ENCODE measurements at regions of chr2 and their contacts with region 1.

Region 1: DNA sequence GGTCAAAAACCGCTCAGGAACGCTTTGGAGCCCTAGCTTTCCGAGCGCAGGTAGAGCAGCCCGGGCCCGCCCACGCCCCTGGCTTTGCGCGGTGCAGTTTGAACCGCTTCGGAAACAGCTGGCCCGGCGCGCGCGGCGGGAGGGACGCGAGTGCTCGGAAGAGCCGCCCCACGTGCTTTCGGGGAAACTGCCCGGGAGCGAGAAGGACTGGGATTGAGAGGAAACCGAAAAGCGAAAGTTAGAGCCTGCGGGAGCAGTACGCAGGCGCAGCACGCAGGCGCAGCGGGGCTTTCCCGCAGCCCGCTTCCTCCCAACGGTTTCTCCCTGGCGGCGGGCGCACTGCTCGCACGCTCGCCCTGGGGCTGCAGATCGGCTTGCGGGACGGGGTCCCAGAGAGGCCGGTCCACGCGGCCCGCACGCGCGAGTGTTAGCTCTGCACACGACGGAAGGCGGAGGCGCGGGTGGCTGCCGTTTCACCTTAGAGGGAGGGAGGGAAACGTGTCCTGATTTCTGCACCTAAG is 6.3 kb upstream of the STAT1 start:
- DNase-seq: peak; percentile 96
- ATAC-seq: peak; percentile 100

Region 2: DNA sequence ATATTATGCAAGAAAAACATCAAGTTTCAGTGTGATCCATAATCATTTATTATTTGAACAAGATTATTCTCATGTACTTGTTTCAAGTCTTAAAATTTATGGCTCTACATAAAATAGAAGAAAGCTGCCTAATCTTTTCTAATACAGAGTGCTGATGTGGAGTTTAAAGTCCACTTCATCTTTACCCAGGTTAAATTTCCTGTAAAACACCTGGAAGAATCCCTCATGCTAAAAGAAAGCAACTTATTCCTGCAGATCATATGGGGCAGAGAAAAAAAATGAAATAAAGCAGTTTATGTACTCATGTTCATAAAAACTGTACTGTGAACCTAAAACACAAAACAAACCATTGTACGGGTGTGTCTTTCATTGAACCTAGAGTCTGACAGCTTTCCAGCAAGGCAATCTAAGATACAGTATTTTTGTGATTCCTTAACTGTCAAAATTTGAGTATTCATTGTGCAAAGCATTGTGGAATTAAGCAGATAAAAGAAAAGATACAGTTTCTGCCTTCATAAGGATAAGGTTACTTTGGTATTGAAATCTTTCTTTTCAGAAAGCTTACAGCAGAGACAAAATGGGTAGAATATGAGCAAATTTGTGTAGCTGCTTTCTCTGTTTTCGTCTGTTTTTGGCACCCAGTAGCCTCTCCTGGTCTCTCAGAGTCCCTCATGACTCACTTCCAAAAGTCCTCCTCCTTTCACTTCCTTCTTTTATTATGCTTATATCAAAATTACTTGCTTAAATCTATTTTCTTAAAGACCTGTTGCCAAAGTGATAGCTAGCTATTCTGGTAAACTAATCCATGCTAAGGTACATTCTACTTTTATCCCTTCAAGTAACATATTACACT is 166.5 kb before region 1 on chr2:
- intact Hi-C with region 1: loop called (anchors 10 kb)
- DNase-seq: no peak
- ATAC-seq: peak; percentile 48

Region 3: GRCh38 chr2:191265311-191266170 is 245.3 kb after region 1 on chr2:
- intact Hi-C with region 1: no loop called
- DNase-seq: no peak
- ATAC-seq: peak; percentile 63

Measured in left ventricle myocardium superior (tissue), 1 donor.